CD4-positive, alpha-beta T cell (primary cell): ENCODE measurements at regions of chr6 and their contacts with region 1.

Region 1: GRCh38 chr6:28266962-28267694 is at the start of gene ZSCAN26:
- DNase-seq: peak; percentile 78 to 93 (median 85)
- ATAC-seq: peak; percentile 95
- H3K4me3 ChIP-seq: peak within 1 kb of the TSS; percentile 70
- H3K4me3 Mint-ChIP-seq: no peak within 1 kb of the TSS
- H3K27ac ChIP-seq: peak within 1 kb of the TSS; percentile 51 to 80
- H3K27ac Mint-ChIP-seq: no peak within 1 kb of the TSS
- H3K4me1 ChIP-seq: peaks cover 8% of the 10 kb centered on the region
- H3K4me1 Mint-ChIP-seq: peaks cover 19% of the 10 kb centered on the region
- H3K27me3 ChIP-seq: no peaks in the 10 kb centered on the region
- H3K27me3 Mint-ChIP-seq: peaks cover 2% of the 10 kb centered on the region
- CTCF ChIP-seq: no peak
- total RNA-seq, gene ZSCAN26: 6.2 to 8.0 TPM

Region 2: GRCh38 chr6:28080631-28081485 is 186.3 kb before region 1 on chr6:
- CTCF ChIA-PET with region 1: no interaction called
- POLR2A ChIA-PET with region 1: no interaction called
- intact Hi-C with region 1: loop called in 1 of 2 experiments (anchors 5 kb)
- DNase-seq: peak; percentile 81 to 96 (median 90)
- ATAC-seq: peak; percentile 76
- H3K4me3 ChIP-seq: peak overlapping the region; percentile 71
- H3K4me3 Mint-ChIP-seq: peak overlapping the region; percentile 86
- H3K27ac ChIP-seq: peak overlapping the region; percentile 82 to 90
- H3K27ac Mint-ChIP-seq: peak overlapping the region; percentile 88
- H3K4me1 ChIP-seq: peaks cover 16% of the 10 kb centered on the region
- H3K4me1 Mint-ChIP-seq: peaks cover 22% of the 10 kb centered on the region
- H3K27me3 ChIP-seq: no peaks in the 10 kb centered on the region
- H3K27me3 Mint-ChIP-seq: no peaks in the 10 kb centered on the region
- CTCF ChIP-seq: no peak

Region 3: DNA sequence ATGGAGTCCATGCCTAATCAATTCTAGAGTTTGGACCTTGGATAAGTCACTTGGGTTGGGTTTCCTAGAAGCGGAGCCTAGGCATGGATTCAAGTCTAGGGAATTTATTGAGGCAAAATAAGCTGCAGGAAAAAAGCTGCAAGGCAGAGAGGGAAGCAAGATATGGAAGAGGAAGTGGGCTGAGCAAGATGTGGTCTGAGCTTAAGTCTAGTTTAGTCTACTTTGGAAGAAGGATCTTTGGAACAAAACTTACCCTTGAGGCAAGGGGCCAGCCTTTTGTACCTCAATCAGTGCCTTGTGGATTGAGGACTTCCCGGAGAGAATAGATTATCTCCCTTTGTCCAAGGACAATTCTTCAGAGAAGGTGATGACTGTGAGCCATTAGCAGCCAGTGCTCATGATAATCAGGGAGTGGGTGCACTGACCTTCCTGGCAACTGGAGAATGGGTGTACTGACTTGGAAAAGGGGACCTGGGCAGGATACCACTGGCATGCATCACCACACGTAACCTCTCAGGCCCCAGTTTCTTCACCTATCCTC is 31.1 kb before region 1 on chr6:
- CTCF ChIA-PET with region 1: no interaction called
- POLR2A ChIA-PET with region 1: no interaction called
- intact Hi-C with region 1: no loop called
- DNase-seq: no peak
- ATAC-seq: no peak
- H3K4me3 ChIP-seq: no peak overlapping the region
- H3K4me3 Mint-ChIP-seq: no peak overlapping the region
- H3K27ac ChIP-seq: no peak overlapping the region
- H3K27ac Mint-ChIP-seq: no peak overlapping the region
- H3K4me1 ChIP-seq: no peaks in the 10 kb centered on the region
- H3K4me1 Mint-ChIP-seq: no peaks in the 10 kb centered on the region
- H3K27me3 ChIP-seq: no peaks in the 10 kb centered on the region
- H3K27me3 Mint-ChIP-seq: peaks cover 18% of the 10 kb centered on the region
- CTCF ChIP-seq: no peak

Region 4: DNA sequence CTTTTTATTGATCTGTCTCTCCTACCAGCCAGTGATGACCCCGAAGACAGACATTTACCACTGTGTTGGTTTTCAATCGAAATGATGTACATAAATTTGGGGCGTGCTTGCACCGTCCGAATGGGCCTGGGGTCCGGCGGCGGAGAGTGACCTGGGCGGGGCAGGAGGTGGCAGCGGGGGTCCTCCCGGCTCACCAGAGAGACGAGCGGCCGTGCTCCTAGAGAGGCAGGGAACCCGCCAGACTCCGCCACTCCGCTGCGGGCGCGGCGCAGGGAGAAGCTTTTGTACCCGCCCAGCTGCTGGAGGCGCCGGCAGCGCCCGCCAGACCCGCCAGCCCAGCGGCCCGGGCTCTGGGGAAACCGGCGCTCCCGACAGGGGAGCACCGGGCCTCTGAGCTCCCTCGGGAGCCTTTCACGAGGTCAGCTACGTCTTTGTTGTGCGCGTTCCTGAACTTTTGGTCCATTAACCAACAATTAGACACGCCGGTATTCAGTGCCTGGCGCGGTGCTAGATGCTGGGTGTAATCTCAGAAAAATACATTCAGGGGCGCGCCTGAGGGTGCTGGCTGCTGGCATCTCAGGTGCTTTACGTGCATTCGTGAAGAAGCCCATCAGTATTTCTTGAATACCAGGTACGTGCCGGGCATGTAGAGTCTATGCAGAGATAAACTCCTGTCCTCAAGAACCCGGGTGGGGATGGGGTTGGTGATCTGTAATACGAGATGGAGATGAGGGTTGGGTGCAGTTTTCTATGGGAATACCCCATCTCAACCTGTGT is 14.3 kb after region 1 on chr6 and contains the start of gene PGBD1:
- CTCF ChIA-PET with region 1: no interaction called
- POLR2A ChIA-PET with region 1: interaction called, 12 read pairs
- intact Hi-C with region 1: no loop called
- DNase-seq: peak in 10 of 14 experiments; percentile 13 to 58 (median 34)
- ATAC-seq: peak; percentile 55
- H3K4me3 ChIP-seq: peak within 1 kb of the TSS; percentile 46
- H3K4me3 Mint-ChIP-seq: peak within 1 kb of the TSS; percentile 67
- H3K27ac ChIP-seq: no peak within 1 kb of the TSS
- H3K27ac Mint-ChIP-seq: no peak within 1 kb of the TSS
- H3K4me1 ChIP-seq: peaks cover 10% of the 10 kb centered on the region
- H3K4me1 Mint-ChIP-seq: peaks cover 8% of the 10 kb centered on the region
- H3K27me3 ChIP-seq: peaks cover 12 to 33% of the 10 kb centered on the region in 2 experiments
- H3K27me3 Mint-ChIP-seq: peaks cover 48% of the 10 kb centered on the region
- CTCF ChIP-seq: no peak
- total RNA-seq, gene PGBD1: 1.3 to 1.4 TPM

Region 5: DNA sequence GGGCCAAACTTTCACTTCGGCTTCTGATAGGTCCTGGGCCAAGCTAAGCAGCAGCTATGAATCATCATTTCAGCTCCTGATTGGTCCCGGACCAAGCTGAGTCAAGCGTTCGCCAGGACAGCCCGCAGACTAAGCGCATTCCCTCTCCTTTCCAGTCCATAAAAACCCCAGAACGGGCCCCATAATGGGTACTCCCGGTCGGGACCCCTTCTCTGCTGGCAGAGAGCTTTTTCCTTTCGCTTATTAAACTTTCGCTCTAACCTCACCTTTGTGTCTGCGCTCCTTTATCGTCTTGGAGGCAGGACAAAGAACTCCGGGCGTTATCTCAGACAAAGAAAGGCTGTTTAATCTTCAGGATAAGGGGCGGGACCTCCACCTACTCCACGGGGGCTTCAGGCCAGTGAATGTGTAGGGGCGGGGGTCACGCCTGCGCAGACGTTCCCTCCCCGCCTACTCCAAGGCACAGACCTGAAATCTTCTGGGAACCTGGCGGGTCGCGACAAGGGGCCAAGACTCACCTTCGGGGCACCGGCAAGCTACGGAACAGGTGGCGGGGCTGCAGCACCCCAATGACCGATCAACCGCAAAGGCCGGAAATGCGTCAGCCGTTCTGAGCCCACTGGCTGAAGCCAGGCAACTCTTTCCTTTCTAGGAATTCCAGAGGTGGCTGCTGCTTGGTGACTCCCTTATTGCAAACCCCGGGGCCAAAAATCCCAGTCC is 68.6 kb after region 1 on chr6 and contains the start of gene ZSCAN31:
- CTCF ChIA-PET with region 1: interaction called, 4 read pairs
- POLR2A ChIA-PET with region 1: interaction called, 18 read pairs
- intact Hi-C with region 1: no loop called
- DNase-seq: peak; percentile 59 to 96 (median 72)
- ATAC-seq: peak; percentile 91
- H3K4me3 ChIP-seq: peak within 1 kb of the TSS; percentile 65
- H3K4me3 Mint-ChIP-seq: no peak within 1 kb of the TSS
- H3K27ac ChIP-seq: peak within 1 kb of the TSS; percentile 81 to 85
- H3K27ac Mint-ChIP-seq: no peak within 1 kb of the TSS
- H3K4me1 ChIP-seq: peaks cover 23% of the 10 kb centered on the region
- H3K4me1 Mint-ChIP-seq: peaks cover 5% of the 10 kb centered on the region
- H3K27me3 ChIP-seq: no peaks in the 10 kb centered on the region
- H3K27me3 Mint-ChIP-seq: no peaks in the 10 kb centered on the region
- CTCF ChIP-seq: no peak
- total RNA-seq, gene ZSCAN31: 0.88 to 1.1 TPM

Region 6: GRCh38 chr6:28349892-28350737 is 83.0 kb after region 1 on chr6 and contains the start of gene ZKSCAN3:
- CTCF ChIA-PET with region 1: interaction called, 3 read pairs
- POLR2A ChIA-PET with region 1: interaction called, 21 read pairs
- intact Hi-C with region 1: loop called (anchors 1 to 5 kb)
- DNase-seq: peak; percentile 65 to 89 (median 80)
- ATAC-seq: peak; percentile 100
- H3K4me3 ChIP-seq: peak within 1 kb of the TSS; percentile 73
- H3K4me3 Mint-ChIP-seq: peak within 1 kb of the TSS; percentile 99
- H3K27ac ChIP-seq: peak within 1 kb of the TSS in 1 of 2 donors; percentile 46
- H3K27ac Mint-ChIP-seq: peak within 1 kb of the TSS; percentile 85
- H3K4me1 ChIP-seq: peaks cover 13% of the 10 kb centered on the region
- H3K4me1 Mint-ChIP-seq: peaks cover 43% of the 10 kb centered on the region
- H3K27me3 ChIP-seq: peaks cover 0 to 11% of the 10 kb centered on the region in 2 experiments
- H3K27me3 Mint-ChIP-seq: peaks cover 27% of the 10 kb centered on the region
- CTCF ChIP-seq: no peak
- total RNA-seq, gene ZKSCAN3: 0.88 to 0.89 TPM

Region 7: DNA sequence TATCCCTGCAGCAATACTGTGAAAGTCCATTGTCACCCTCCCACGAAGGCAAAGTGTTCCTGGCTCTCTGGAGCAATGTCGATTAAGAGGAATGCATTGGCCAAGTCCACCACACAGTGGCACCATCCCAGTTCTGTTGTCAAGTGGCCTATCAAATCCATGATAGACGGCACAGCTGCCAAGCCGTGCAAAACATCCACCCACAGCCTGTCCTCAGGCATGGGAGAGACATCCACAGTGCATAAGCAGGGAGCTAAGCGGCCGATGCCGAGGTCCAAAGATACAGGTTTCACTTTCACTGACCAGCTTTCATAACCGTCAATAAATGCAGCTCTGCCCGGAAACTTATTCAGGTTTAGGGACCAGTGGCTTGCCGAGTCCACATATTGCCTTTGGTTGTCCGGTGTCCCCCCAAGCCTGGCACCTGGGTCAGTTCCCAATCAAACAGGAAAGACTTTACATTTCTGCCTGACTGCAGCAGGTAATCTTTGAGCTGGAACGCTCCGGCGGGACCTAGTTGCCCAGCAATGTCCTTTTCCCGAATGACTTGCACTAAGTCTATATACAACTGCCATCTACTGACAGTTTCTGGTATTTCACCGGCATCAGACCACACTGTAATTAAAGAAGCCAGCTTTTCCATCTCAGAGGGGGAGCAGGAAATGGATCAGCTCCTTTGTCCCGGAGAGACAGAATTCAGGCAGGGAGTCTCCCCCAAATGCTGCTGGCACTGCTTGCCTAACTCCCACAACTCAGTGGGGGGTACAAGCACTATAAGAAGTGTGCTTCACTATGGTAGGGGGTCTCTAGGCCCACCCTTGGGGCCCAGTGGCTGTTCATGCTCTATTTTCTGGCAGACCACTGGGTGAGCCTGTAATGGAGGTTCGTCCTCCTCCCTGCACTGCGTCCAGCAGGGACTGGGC is 88.9 kb after region 1 on chr6:
- CTCF ChIA-PET with region 1: interaction called, 18 read pairs
- POLR2A ChIA-PET with region 1: interaction called, 11 read pairs
- intact Hi-C with region 1: no loop called
- DNase-seq: peak; percentile 26 to 84 (median 42)
- ATAC-seq: peak; percentile 93
- H3K4me3 ChIP-seq: peak overlapping the region; percentile 64
- H3K4me3 Mint-ChIP-seq: peak overlapping the region; percentile 90
- H3K27ac ChIP-seq: no peak overlapping the region
- H3K27ac Mint-ChIP-seq: peak overlapping the region; percentile 22
- H3K4me1 ChIP-seq: peaks cover 21% of the 10 kb centered on the region
- H3K4me1 Mint-ChIP-seq: peaks cover 42% of the 10 kb centered on the region
- H3K27me3 ChIP-seq: no peaks in the 10 kb centered on the region
- H3K27me3 Mint-ChIP-seq: no peaks in the 10 kb centered on the region
- CTCF ChIP-seq: peak; percentile 77

Region 8: GRCh38 chr6:28399350-28400121 is 132.4 kb after region 1 on chr6 and contains the start of gene ZSCAN12:
- CTCF ChIA-PET with region 1: no interaction called
- POLR2A ChIA-PET with region 1: interaction called, 5 read pairs
- intact Hi-C with region 1: loop called in 1 of 2 experiments (anchors 5 kb)
- DNase-seq: peak; percentile 70 to 90 (median 82)
- ATAC-seq: peak; percentile 92
- H3K4me3 ChIP-seq: peak within 1 kb of the TSS; percentile 69
- H3K4me3 Mint-ChIP-seq: peak within 1 kb of the TSS; percentile 97
- H3K27ac ChIP-seq: peak within 1 kb of the TSS; percentile 23 to 49
- H3K27ac Mint-ChIP-seq: peak within 1 kb of the TSS; percentile 86
- H3K4me1 ChIP-seq: peaks cover 20% of the 10 kb centered on the region
- H3K4me1 Mint-ChIP-seq: peaks cover 55% of the 10 kb centered on the region
- H3K27me3 ChIP-seq: no peaks in the 10 kb centered on the region
- H3K27me3 Mint-ChIP-seq: peaks cover 32% of the 10 kb centered on the region
- CTCF ChIP-seq: peak; percentile 70
- total RNA-seq, gene ZSCAN12: 2.0 to 2.3 TPM